HCT116 (cell line): ENCODE measurements at regions of chr11 and their contacts with region 1.

Region 1: DNA sequence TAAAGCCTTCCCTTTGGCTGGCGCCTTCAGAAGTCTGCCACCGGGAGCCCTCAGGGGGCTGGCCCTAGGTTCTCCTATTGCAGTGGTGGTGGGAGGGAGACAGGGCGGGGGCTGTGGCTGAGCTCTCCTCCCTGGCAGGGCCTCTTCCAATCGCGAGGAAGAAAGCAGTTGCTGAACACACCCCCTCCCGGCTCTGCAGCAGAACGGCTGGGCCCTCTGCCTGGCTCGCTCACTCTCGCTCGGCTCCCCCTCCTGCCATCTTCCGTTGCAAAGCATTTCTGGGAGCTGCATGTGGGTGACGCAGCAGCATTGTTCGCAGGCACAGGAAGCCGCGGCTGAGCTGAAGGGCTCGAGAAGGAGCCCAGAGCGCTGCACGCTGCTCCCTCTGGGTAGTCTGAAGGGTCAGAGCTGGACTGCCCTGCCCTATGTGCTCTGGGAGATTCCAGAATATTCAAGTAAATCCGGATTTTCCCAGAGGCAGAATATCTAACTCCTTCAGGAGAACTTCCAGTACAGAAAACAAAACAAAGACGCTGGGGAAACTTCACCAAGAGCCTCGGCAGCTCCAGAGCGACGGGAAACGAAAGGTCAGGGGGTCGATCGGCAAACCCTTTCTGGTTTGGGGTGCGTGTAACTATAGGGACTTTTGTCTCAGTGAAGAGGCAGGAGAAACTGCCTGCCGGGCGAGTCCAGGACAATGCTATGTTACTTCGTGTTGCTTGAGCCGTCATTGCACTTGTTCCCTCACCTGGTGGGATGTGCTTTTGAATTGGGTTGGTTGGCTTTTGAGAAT is 26.3 kb upstream of the GRK2 start:
- DNase-seq: peak; percentile 93
- ATAC-seq: peak; percentile 96
- H3K4me3 ChIP-seq: peak overlapping the region; percentile 69 to 99
- H3K27ac ChIP-seq: peak overlapping the region; percentile 77
- H3K4me1 ChIP-seq: peaks cover 19 to 33% of the 10 kb centered on the region in 2 experiments
- H3K27me3 ChIP-seq: no peaks in the 10 kb centered on the region
- CTCF ChIP-seq: no peak
- POLR2A ChIP-seq: peak; percentile 95
- RAD21 ChIP-seq: peak; percentile 28; the same call in 1 of the 2 replicates

Region 2: GRCh38 chr11:67053896-67054842 is 185.8 kb before region 1 on chr11:
- CTCF ChIA-PET with region 1: no interaction called
- POLR2A ChIA-PET with region 1: interaction called, 5 read pairs
- RAD21 ChIA-PET with region 1: interaction called in 1 of 2 experiments, 4 read pairs
- intact Hi-C with region 1: loop called (anchors 10 kb)
- DNase-seq: no peak
- ATAC-seq: peak; percentile 65
- H3K4me3 ChIP-seq: no peak overlapping the region
- H3K27ac ChIP-seq: peak overlapping the region; percentile 47
- H3K4me1 ChIP-seq: peaks cover 24 to 50% of the 10 kb centered on the region in 2 experiments
- H3K27me3 ChIP-seq: no peaks in the 10 kb centered on the region
- CTCF ChIP-seq: peak in 2 of 3 experiments; percentile 89; a peak in 4 of 6 replicates
- POLR2A ChIP-seq: no peak
- RAD21 ChIP-seq: no peak

Region 3: DNA sequence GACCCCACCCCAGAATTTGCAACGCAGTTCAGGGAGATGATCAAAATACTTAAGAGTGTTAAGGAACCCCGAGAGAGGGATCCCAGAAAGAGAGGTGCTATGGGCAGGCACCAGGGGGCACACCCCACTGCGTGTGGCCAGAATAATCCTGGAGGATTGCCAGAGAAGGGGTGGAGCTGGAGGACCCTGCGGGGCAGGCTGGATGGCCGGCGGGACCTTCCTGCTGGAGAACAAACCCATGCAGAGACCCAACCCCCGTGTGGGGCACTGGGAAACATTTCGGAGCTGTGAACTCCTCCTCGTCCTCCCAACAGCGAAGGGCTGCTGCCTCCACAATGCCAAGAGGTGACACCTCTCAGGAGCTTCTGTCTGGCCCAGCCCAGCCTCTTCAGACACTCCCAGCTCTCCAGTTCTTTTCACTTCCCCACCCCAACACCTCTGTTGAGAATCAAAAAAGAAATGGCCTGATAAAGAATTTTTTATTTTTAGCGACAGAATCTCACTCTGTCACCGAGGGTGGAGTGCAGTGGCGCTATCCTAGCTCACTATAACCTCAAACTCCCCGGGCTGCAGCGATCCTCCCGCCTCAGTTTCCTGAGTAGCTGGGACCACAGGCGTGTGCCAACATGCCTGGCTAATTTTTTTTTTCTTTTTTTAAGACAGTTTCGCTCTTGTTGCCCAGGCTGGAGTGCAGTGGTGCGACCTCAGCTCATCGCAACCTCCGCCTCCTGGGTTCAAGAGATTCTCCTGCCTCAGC is 157.8 kb before region 1 on chr11:
- CTCF ChIA-PET with region 1: interaction called, 3 read pairs
- POLR2A ChIA-PET with region 1: interaction called, 5 read pairs
- RAD21 ChIA-PET with region 1: no interaction called
- intact Hi-C with region 1: loop called (anchors 2 kb)
- DNase-seq: no peak
- ATAC-seq: peak; percentile 16
- H3K4me3 ChIP-seq: peak overlapping the region in 1 of 2 experiments; percentile 24; a peak in 2 of 4 replicates
- H3K27ac ChIP-seq: no peak overlapping the region
- H3K4me1 ChIP-seq: peaks cover 25 to 40% of the 10 kb centered on the region in 2 experiments
- H3K27me3 ChIP-seq: no peaks in the 10 kb centered on the region
- CTCF ChIP-seq: peak in 1 of 3 experiments; percentile 20; a peak in 1 of 6 replicates
- POLR2A ChIP-seq: no peak
- RAD21 ChIP-seq: peak; percentile 20; the same call in 1 of the 2 replicates

Region 4: GRCh38 chr11:67265633-67266423 is 25.8 kb after region 1 on chr11:
- CTCF ChIA-PET with region 1: interaction called, 12 read pairs
- POLR2A ChIA-PET with region 1: interaction called, 5 read pairs
- RAD21 ChIA-PET with region 1: no interaction called
- intact Hi-C with region 1: no loop called
- DNase-seq: no peak
- ATAC-seq: peak; percentile 76
- H3K4me3 ChIP-seq: peak overlapping the region; percentile 22 to 47
- H3K27ac ChIP-seq: peak overlapping the region; percentile 84; the same call in 1 of the 2 replicates
- H3K4me1 ChIP-seq: peaks cover 14 to 43% of the 10 kb centered on the region in 2 experiments; a peak in 3 of 4 replicates
- H3K27me3 ChIP-seq: no peaks in the 10 kb centered on the region
- CTCF ChIP-seq: peak in 2 of 3 experiments; percentile 59 to 68; a peak in 4 of 6 replicates
- POLR2A ChIP-seq: no peak
- RAD21 ChIP-seq: no peak; the same call in 1 of the 2 replicates